ENCODE measurements at regions of chr3 and their contacts with region 1.

Region 1: DNA sequence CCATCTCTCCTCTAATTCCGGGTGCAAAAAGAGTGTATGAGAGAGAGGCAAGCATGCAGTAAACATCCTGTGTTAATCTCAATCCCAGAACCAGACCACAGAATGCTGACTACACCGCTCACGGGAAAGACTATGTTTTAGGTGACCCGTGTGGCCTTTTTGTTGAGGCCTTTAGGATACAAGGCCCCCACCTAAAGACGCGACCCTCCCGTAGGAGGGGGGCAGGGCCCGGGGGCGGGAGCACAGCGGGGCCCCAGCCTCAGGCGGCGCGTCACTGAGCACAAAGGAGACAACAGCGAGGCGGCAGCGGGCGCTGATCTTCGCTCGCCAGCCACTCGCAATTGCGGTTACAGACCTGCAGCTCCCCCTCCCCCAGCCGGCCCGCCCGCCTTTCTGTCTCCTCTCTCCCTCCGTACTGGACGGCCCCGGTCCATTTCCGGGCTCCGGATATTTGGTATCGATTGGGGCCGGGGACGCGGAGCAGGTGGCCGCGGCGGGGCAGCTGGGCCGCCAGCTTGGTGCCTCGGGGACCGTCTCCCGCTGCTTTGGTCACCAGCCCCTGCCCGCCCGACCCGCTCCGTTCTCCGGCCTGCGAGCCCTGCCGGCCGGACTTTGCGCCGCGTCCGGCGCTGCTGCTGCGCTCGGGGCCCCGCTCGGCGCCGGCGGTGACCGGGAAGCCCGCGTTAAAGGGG is at the start of gene CCDC50:
- DNase-seq: peak; percentile 78 to 82
- ATAC-seq: peak; percentile 79 to 87
- H3K4me3 ChIP-seq: peak within 1 kb of the TSS; percentile 79 to 97 (median 89)
- H3K27ac ChIP-seq: peak within 1 kb of the TSS; percentile 89 to 97 (median 94)
- H3K4me1 ChIP-seq: peaks cover 37 to 43% of the 10 kb centered on the region in 2 donors
- H3K27me3 ChIP-seq: no peaks in the 10 kb centered on the region
- CTCF ChIP-seq: no peak
- POLR2A ChIP-seq: peak; percentile 59 to 77
- total RNA-seq, gene CCDC50: 45.0 to 69.9 (median 64.2) TPM

Region 2: GRCh38 chr3:191350396-191351090 is 21.4 kb after region 1 on chr3:
- in situ Hi-C with region 1: no loop called
- intact Hi-C with region 1: loop called (anchors 2 kb)
- DNase-seq: no peak
- ATAC-seq: no peak
- H3K4me3 ChIP-seq: peak overlapping the region in 1 of 4 donors; percentile 3
- H3K27ac ChIP-seq: peak overlapping the region; percentile 18 to 55 (median 46)
- H3K4me1 ChIP-seq: peaks cover 61 to 78% of the 10 kb centered on the region in 2 donors
- H3K27me3 ChIP-seq: no peaks in the 10 kb centered on the region
- CTCF ChIP-seq: no peak
- POLR2A ChIP-seq: no peak

Region 3: DNA sequence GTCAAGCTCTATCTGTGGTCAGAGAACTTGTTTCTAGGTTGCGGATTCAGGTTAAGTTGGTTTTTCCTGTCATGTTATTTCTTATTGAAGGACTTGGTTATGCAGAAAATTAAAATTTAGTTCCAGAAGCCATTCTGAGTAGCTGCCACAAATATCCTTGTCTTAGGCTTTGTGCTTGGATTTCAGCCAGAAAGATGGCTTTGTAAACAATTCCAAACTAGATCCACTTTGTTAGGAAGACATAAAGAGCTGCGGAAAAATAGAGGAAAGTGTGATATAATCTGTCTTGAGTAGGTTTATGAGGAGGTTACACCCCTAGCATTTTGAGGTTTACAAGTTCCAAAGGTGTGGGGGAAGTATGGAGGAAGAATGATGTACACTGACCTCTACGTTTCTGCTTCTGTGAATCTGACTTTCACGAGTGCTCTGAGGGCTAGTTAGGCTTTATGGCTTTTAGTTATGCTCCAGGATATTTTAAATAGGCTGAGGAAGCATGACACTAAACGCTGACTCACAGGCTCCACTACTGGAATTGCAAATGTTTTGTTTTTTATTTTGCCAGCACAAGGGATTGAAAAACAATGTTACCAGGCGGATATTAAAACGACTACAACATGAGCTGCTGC is 47.5 kb after region 1 on chr3:
- in situ Hi-C with region 1: no loop called
- intact Hi-C with region 1: loop called (anchors 5 kb)
- DNase-seq: no peak
- ATAC-seq: peak; percentile 76 to 77
- H3K4me3 ChIP-seq: peak overlapping the region in 1 of 4 donors; percentile 1
- H3K27ac ChIP-seq: peak overlapping the region; percentile 59 to 64 (median 62)
- H3K4me1 ChIP-seq: peaks cover 34 to 39% of the 10 kb centered on the region in 2 donors
- H3K27me3 ChIP-seq: no peaks in the 10 kb centered on the region
- CTCF ChIP-seq: no peak
- POLR2A ChIP-seq: peak in 1 of 2 donors; percentile 20

Region 4: GRCh38 chr3:191688756-191689433 is 359.8 kb after region 1 on chr3:
- in situ Hi-C with region 1: no loop called
- intact Hi-C with region 1: no loop called
- DNase-seq: no peak
- ATAC-seq: no peak
- H3K4me3 ChIP-seq: no peak overlapping the region
- H3K27ac ChIP-seq: no peak overlapping the region
- H3K4me1 ChIP-seq: no peaks in the 10 kb centered on the region
- H3K27me3 ChIP-seq: no peaks in the 10 kb centered on the region
- CTCF ChIP-seq: no peak
- POLR2A ChIP-seq: no peak

Measured in gastrocnemius medialis (tissue), 4 donors.